ENCODE measurements at regions of chr19 and their contacts with region 1.

Region 1: DNA sequence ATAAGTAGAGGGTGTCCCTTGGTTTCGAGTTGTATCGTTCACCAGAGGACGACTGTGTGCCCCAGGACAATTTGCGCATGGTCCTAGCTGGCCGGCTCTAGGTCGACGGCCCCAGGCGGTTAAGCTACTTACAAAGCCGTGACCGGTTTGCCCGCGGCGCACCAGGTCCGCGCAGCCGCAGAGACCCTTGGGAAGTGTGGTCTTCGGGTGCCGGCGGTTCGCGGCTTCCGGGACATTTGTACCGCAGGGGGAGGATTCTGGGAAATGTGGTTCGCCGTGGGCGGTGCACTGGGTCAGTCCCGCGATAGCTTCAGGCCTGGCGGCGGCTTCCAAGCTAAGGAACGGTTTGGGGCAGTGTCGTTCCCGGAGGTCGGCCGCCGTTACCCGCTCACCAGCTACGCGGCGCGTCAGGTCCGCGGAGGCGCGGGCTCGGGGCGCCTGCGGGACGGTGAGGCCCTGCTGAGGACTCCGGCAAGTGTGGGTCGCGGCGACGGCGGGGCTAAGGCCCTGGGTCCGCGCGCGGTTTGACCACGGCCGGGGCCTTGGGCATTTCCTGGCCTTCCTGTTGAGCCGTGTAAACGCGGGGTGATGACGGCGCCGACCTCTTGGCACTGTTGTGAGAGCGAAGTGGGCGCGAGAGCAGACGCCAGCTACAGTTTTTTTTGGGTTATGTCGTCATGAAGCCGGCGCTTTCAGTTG is at the start of gene ZNF302:
- DNase-seq: peak; percentile 86 to 97 (median 94)
- ATAC-seq: peak; percentile 87
- H3K4me3 ChIP-seq: peak within 1 kb of the TSS; percentile 85 to 94
- H3K4me3 Mint-ChIP-seq: peak within 1 kb of the TSS; percentile 99
- H3K27ac ChIP-seq: peak within 1 kb of the TSS; percentile 80 to 86
- H3K27ac Mint-ChIP-seq: peak within 1 kb of the TSS; percentile 100
- H3K4me1 ChIP-seq: peaks cover 23% of the 10 kb centered on the region
- H3K4me1 Mint-ChIP-seq: peaks cover 36% of the 10 kb centered on the region
- H3K27me3 ChIP-seq: no peaks in the 10 kb centered on the region
- H3K27me3 Mint-ChIP-seq: peaks cover 10% of the 10 kb centered on the region
- CTCF ChIP-seq: no peak
- total RNA-seq, gene ZNF302: 8.0 to 10.5 TPM

Region 2: GRCh38 chr19:34359140-34359953 is 318.2 kb before region 1 on chr19:
- CTCF ChIA-PET with region 1: no interaction called
- POLR2A ChIA-PET with region 1: interaction called, 3 read pairs
- intact Hi-C with region 1: loop called in 1 of 2 experiments (anchors 10 kb)
- DNase-seq: peak; percentile 80 to 97 (median 93)
- ATAC-seq: peak; percentile 89
- H3K4me3 ChIP-seq: peak overlapping the region; percentile 46 to 52
- H3K4me3 Mint-ChIP-seq: peak overlapping the region; percentile 90
- H3K27ac ChIP-seq: peak overlapping the region; percentile 59 to 77
- H3K27ac Mint-ChIP-seq: peak overlapping the region; percentile 94
- H3K4me1 ChIP-seq: peaks cover 16% of the 10 kb centered on the region
- H3K4me1 Mint-ChIP-seq: peaks cover 27% of the 10 kb centered on the region
- H3K27me3 ChIP-seq: no peaks in the 10 kb centered on the region
- H3K27me3 Mint-ChIP-seq: no peaks in the 10 kb centered on the region
- CTCF ChIP-seq: peak; percentile 63

Region 3: GRCh38 chr19:34712395-34713261 is 35.1 kb after region 1 on chr19:
- CTCF ChIA-PET with region 1: interaction called, 8 read pairs
- POLR2A ChIA-PET with region 1: no interaction called
- intact Hi-C with region 1: loop called in 1 of 2 experiments (anchors 2 kb)
- DNase-seq: peak; percentile 11 to 86 (median 55)
- ATAC-seq: peak; percentile 49
- H3K4me3 ChIP-seq: no peak overlapping the region
- H3K4me3 Mint-ChIP-seq: no peak overlapping the region
- H3K27ac ChIP-seq: no peak overlapping the region
- H3K27ac Mint-ChIP-seq: no peak overlapping the region
- H3K4me1 ChIP-seq: no peaks in the 10 kb centered on the region
- H3K4me1 Mint-ChIP-seq: no peaks in the 10 kb centered on the region
- H3K27me3 ChIP-seq: peaks cover 0 to 4% of the 10 kb centered on the region in 2 experiments
- H3K27me3 Mint-ChIP-seq: peaks cover 35% of the 10 kb centered on the region
- CTCF ChIP-seq: peak; percentile 81

Region 4: GRCh38 chr19:34772697-34773554 is 95.4 kb after region 1 on chr19 and contains the start of gene ZNF599:
- CTCF ChIA-PET with region 1: no interaction called
- POLR2A ChIA-PET with region 1: no interaction called
- intact Hi-C with region 1: loop called (anchors 1 kb)
- DNase-seq: peak; percentile 77 to 94 (median 90)
- ATAC-seq: peak; percentile 97
- H3K4me3 ChIP-seq: peak within 1 kb of the TSS; percentile 80 to 88
- H3K4me3 Mint-ChIP-seq: peak within 1 kb of the TSS; percentile 98
- H3K27ac ChIP-seq: peak within 1 kb of the TSS; percentile 69 to 77
- H3K27ac Mint-ChIP-seq: peak within 1 kb of the TSS; percentile 98
- H3K4me1 ChIP-seq: peaks cover 9% of the 10 kb centered on the region
- H3K4me1 Mint-ChIP-seq: peaks cover 21% of the 10 kb centered on the region
- H3K27me3 ChIP-seq: no peaks in the 10 kb centered on the region
- H3K27me3 Mint-ChIP-seq: peaks cover 6% of the 10 kb centered on the region
- CTCF ChIP-seq: no peak
- total RNA-seq, gene ZNF599: 3.9 to 4.5 TPM

Region 5: DNA sequence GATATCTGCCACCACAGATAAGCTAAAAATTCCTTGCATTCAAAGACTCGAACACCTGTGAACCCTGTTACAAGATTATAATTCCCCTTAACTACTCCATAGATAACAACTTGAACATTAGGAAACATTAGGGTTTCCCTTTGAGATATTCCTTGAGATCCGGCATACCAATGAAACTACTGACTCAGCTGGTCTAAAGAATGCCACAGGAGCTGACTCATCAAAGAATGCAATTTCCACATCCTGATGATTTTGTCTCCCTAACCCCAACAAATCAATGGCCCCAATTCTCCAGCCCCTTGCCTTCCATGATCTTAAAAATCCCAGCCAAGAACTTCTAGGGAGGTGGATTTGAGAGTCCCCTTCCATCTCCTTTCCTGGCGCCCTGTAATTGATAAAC is 131.0 kb after region 1 on chr19:
- CTCF ChIA-PET with region 1: no interaction called
- POLR2A ChIA-PET with region 1: no interaction called
- intact Hi-C with region 1: no loop called
- DNase-seq: no peak
- ATAC-seq: no peak
- H3K4me3 ChIP-seq: no peak overlapping the region
- H3K4me3 Mint-ChIP-seq: no peak overlapping the region
- H3K27ac ChIP-seq: no peak overlapping the region
- H3K27ac Mint-ChIP-seq: no peak overlapping the region
- H3K4me1 ChIP-seq: no peaks in the 10 kb centered on the region
- H3K4me1 Mint-ChIP-seq: no peaks in the 10 kb centered on the region
- H3K27me3 ChIP-seq: no peaks in the 10 kb centered on the region
- H3K27me3 Mint-ChIP-seq: no peaks in the 10 kb centered on the region
- CTCF ChIP-seq: no peak

Region 6: GRCh38 chr19:35748106-35749020 is 1070.8 kb after region 1 on chr19 and contains the start of gene LIN37:
- CTCF ChIA-PET with region 1: no interaction called
- POLR2A ChIA-PET with region 1: no interaction called
- intact Hi-C with region 1: loop called in 1 of 2 experiments (anchors 5 kb)
- DNase-seq: peak; percentile 97 to 100 (median 98)
- ATAC-seq: peak; percentile 72
- H3K4me3 ChIP-seq: peak within 1 kb of the TSS; percentile 84 to 99
- H3K4me3 Mint-ChIP-seq: peak within 1 kb of the TSS; percentile 98
- H3K27ac ChIP-seq: peak within 1 kb of the TSS; percentile 71 to 84
- H3K27ac Mint-ChIP-seq: peak within 1 kb of the TSS; percentile 95
- H3K4me1 ChIP-seq: peaks cover 41% of the 10 kb centered on the region
- H3K4me1 Mint-ChIP-seq: peaks cover 44% of the 10 kb centered on the region
- H3K27me3 ChIP-seq: no peaks in the 10 kb centered on the region
- H3K27me3 Mint-ChIP-seq: no peaks in the 10 kb centered on the region
- CTCF ChIP-seq: no peak
- total RNA-seq, gene LIN37: 5.5 to 9.3 TPM

Measured in CD8-positive, alpha-beta T cell (primary cell).